ENCODE measurements at regions of chr6 and their contacts with region 1.

Region 1: GRCh38 chr6:73515204-73515655 is 5.6 kb downstream of the EEF1A1 start:
- DNase-seq: no peak
- CTCF ChIP-seq: no peak

Region 2: GRCh38 chr6:73497915-73498314 is 17.3 kb before region 1 on chr6:
- CTCF ChIA-PET with region 1: interaction called, 17 read pairs
- POLR2A ChIA-PET with region 1: interaction called, 6 read pairs
- DNase-seq: no peak
- CTCF ChIP-seq: no peak

Region 3: GRCh38 chr6:73604020-73604419 is 88.8 kb after region 1 on chr6:
- CTCF ChIA-PET with region 1: interaction called, 11 read pairs
- POLR2A ChIA-PET with region 1: interaction called, 6 read pairs
- DNase-seq: no peak
- CTCF ChIP-seq: no peak

Region 4: GRCh38 chr6:73610444-73611275 is 95.4 kb after region 1 on chr6:
- CTCF ChIA-PET with region 1: interaction called, 53 read pairs
- POLR2A ChIA-PET with region 1: interaction called, 7 read pairs
- DNase-seq: peak; percentile 44
- CTCF ChIP-seq: peak; percentile 45

Region 5: GRCh38 chr6:73653571-73654424 is 138.6 kb after region 1 on chr6 and contains the start of gene SLC17A5:
- CTCF ChIA-PET with region 1: interaction called, 18 read pairs
- POLR2A ChIA-PET with region 1: interaction called, 17 read pairs
- DNase-seq: peak; percentile 95
- CTCF ChIP-seq: no peak

Region 6: GRCh38 chr6:73823046-73823735 is 308.0 kb after region 1 on chr6:
- CTCF ChIA-PET with region 1: no interaction called
- POLR2A ChIA-PET with region 1: no interaction called
- DNase-seq: no peak
- CTCF ChIP-seq: no peak

Measured in GM10248 (cell line).